Endothelial cell of umbilical vein (primary cell): ENCODE measurements at regions of chr1 and their contacts with region 1.

Region 1: GRCh38 chr1:212915245-212916091 is 34.9 kb upstream of the VASH2 start:
- DNase-seq: peak; percentile 56
- H3K4me3 ChIP-seq: no peak overlapping the region
- H3K27ac ChIP-seq: no peak overlapping the region
- H3K4me1 ChIP-seq: no peaks in the 10 kb centered on the region
- H3K27me3 ChIP-seq: peaks cover 0 to 12% of the 10 kb centered on the region in 2 experiments
- CTCF ChIP-seq: peak; percentile 27 to 45
- POLR2A ChIP-seq: no peak

Region 2: GRCh38 chr1:212814537-212815334 is 100.7 kb before region 1 on chr1:
- CTCF ChIA-PET with region 1: interaction called, 10 read pairs
- POLR2A ChIA-PET with region 1: no interaction called
- dilution Hi-C with region 1: no loop called
- intact Hi-C with region 1: no loop called
- DNase-seq: peak; percentile 27
- H3K4me3 ChIP-seq: no peak overlapping the region
- H3K27ac ChIP-seq: no peak overlapping the region
- H3K4me1 ChIP-seq: peaks cover 2% of the 10 kb centered on the region
- H3K27me3 ChIP-seq: no peaks in the 10 kb centered on the region
- CTCF ChIP-seq: no peak
- POLR2A ChIP-seq: no peak

Region 3: GRCh38 chr1:212994926-212995325 is 79.5 kb after region 1 on chr1:
- CTCF ChIA-PET with region 1: no interaction called
- POLR2A ChIA-PET with region 1: no interaction called
- dilution Hi-C with region 1: no loop called
- intact Hi-C with region 1: loop called (anchors 5 kb)
- DNase-seq: no peak
- H3K4me3 ChIP-seq: no peak overlapping the region
- H3K27ac ChIP-seq: no peak overlapping the region
- H3K4me1 ChIP-seq: no peaks in the 10 kb centered on the region
- H3K27me3 ChIP-seq: no peaks in the 10 kb centered on the region
- CTCF ChIP-seq: no peak
- POLR2A ChIP-seq: no peak